ENCODE measurements at regions of chr12 and their contacts with region 1.

Region 1: GRCh38 chr12:30695199-30696103 is at the start of gene IPO8:
- DNase-seq: peak; percentile 76 to 86 (median 84)
- H3K4me3 ChIP-seq: peak within 1 kb of the TSS; percentile 58 to 94 (median 83)
- H3K4me3 Mint-ChIP-seq: peak within 1 kb of the TSS; percentile 92 to 97
- H3K27ac ChIP-seq: peak within 1 kb of the TSS; percentile 13 to 83
- H3K27ac Mint-ChIP-seq: peak within 1 kb of the TSS; percentile 64 to 94 (median 86)
- H3K4me1 ChIP-seq: peaks cover 20 to 32% of the 10 kb centered on the region in 2 donors
- H3K4me1 Mint-ChIP-seq: peaks cover 35% of the 10 kb centered on the region
- H3K27me3 ChIP-seq: no peaks in the 10 kb centered on the region
- H3K27me3 Mint-ChIP-seq: peaks cover 2 to 10% (median 4%) of the 10 kb centered on the region in 3 donors
- CTCF ChIP-seq: no peak
- polyA plus RNA-seq, gene IPO8: 8.4 to 15.8 (median 12.5) TPM

Region 2: DNA sequence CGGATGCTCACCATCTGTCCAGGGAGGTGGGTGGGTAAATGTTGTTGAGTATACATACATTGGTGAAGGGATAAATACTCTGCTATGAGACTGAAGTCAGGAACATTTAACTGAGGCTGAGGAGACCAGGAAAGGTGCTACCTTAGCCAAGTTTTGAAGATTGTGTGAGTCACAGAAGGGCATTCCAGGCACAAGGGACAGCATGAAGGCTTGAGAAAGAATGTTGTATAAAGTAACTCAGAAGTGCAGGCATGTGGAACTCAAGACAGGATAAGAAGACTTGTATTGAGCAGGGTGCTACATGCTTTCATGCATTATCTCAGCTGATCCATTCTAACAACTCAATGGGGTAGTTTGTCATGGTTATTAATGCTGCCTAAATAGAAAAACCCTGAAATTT is 112.5 kb before region 1 on chr12:
- intact Hi-C with region 1: no loop called
- DNase-seq: no peak
- H3K4me3 ChIP-seq: no peak overlapping the region
- H3K4me3 Mint-ChIP-seq: no peak overlapping the region
- H3K27ac ChIP-seq: no peak overlapping the region
- H3K27ac Mint-ChIP-seq: no peak overlapping the region
- H3K4me1 ChIP-seq: no peaks in the 10 kb centered on the region
- H3K4me1 Mint-ChIP-seq: no peaks in the 10 kb centered on the region
- H3K27me3 ChIP-seq: no peaks in the 10 kb centered on the region
- H3K27me3 Mint-ChIP-seq: peaks cover 0 to 2% (median 2%) of the 10 kb centered on the region in 3 donors
- CTCF ChIP-seq: no peak

Region 3: GRCh38 chr12:30732954-30733637 is 37.6 kb after region 1 on chr12:
- intact Hi-C with region 1: no loop called
- DNase-seq: no peak
- H3K4me3 ChIP-seq: no peak overlapping the region
- H3K4me3 Mint-ChIP-seq: no peak overlapping the region
- H3K27ac ChIP-seq: no peak overlapping the region
- H3K27ac Mint-ChIP-seq: no peak overlapping the region
- H3K4me1 ChIP-seq: no peaks in the 10 kb centered on the region
- H3K4me1 Mint-ChIP-seq: peaks cover 1% of the 10 kb centered on the region
- H3K27me3 ChIP-seq: no peaks in the 10 kb centered on the region
- H3K27me3 Mint-ChIP-seq: peaks cover 0 to 2% (median 0%) of the 10 kb centered on the region in 3 donors
- CTCF ChIP-seq: no peak

Region 4: DNA sequence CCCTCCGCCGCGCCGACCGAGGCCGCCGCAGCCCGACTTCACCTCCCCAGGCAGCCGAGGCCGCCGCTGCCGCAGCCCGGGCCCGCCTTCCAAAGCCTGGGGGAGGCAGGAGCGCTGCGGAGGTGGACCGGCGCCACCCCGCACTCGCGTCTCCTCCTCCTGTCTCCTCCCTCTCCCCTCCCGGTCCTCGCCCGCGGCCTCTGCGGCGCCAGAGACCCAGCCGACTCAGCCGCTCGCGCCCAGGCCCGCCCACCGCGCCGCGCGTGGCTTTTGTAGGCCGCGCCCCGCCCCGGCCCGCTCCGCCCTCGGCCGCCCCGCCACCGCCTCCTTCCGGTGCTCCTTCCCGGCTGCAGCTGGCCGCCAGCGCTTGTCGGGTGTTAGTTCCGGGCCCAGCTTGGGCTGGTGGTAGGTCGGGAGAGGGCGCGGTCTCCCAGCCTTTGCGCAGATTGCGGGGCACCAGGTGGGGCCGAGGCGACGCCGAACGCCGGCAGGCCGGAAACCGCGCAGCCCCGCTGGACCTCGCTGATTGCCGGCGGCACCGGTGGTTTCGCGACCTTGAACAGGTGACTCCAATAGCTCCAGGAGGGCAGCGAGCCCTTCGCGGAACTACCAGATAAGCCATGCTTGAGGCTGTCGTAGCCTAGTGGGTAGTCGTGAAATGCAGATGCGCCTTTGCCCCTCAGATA is 59.4 kb after region 1 on chr12 and contains the start of gene CAPRIN2:
- intact Hi-C with region 1: loop called in 1 of 2 experiments (anchors 10 kb)
- DNase-seq: peak; percentile 83 to 88 (median 88)
- H3K4me3 ChIP-seq: peak within 1 kb of the TSS; percentile 71 to 85 (median 78)
- H3K4me3 Mint-ChIP-seq: peak within 1 kb of the TSS; percentile 90 to 98
- H3K27ac ChIP-seq: peak within 1 kb of the TSS in 1 of 2 donors; percentile 70
- H3K27ac Mint-ChIP-seq: peak within 1 kb of the TSS; percentile 43 to 90 (median 80)
- H3K4me1 ChIP-seq: peaks cover 13 to 15% of the 10 kb centered on the region in 2 donors
- H3K4me1 Mint-ChIP-seq: peaks cover 16% of the 10 kb centered on the region
- H3K27me3 ChIP-seq: peaks cover 0 to 2% of the 10 kb centered on the region in 2 donors
- H3K27me3 Mint-ChIP-seq: peaks cover 9 to 16% (median 15%) of the 10 kb centered on the region in 3 donors
- CTCF ChIP-seq: peak; percentile 43
- polyA plus RNA-seq, gene CAPRIN2: 1.4 to 10.3 (median 2.0) TPM

Measured in CD14-positive monocyte (primary cell).